ENCODE measurements at regions of chr14 and their contacts with region 1.

Region 1: DNA sequence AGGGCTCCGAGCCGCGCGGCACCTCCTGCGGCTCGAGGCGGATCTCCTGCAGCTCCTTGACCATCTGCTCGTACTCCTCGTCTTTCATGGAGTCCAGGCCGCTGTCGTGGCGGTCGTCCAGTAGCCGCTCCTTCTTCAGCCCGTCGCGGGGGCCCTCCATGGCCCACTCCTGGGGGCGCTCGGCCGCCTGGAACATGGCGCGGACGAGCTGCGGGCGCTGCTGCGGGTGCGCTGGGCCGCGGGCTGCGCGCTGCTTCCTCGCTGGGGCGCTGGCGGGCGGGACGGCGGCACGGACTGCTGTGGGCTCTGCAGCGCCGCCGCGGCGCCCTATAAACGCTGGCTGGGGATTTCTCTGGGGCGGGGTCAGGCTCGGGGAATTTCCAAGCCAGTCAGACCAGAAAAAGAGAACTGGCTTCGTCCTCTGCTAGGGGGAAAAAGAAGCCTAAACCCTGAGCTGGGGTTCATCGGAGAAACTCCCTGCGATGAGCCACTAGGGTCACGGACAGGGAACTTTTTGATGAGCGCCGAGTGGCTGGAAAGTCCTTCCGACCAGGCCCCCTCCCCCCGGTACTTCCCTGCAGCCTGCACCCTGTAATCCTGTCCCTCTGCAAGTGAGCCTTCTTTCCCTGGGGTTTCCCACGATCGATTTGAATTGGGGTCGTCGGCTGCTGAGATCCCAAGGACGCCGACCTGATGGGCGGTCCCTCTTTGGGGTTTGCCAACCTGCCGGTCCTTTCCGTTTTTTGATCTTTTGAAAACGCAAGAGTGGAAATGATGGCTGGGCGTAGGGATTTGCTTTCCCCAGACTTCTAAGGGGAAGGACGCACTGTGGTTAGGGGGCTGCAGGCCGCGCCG is at the start of gene NFKBIA:
- DNase-seq: peak; percentile 98
- ATAC-seq: peak; percentile 72
- H3K4me3 Mint-ChIP-seq: peak within 1 kb of the TSS; percentile 99
- H3K27ac Mint-ChIP-seq: peak within 1 kb of the TSS; percentile 98
- H3K4me1 Mint-ChIP-seq: peaks cover 34% of the 10 kb centered on the region
- H3K27me3 Mint-ChIP-seq: no peaks in the 10 kb centered on the region
- total RNA-seq, gene NFKBIA: 264 to 298 TPM

Region 2: DNA sequence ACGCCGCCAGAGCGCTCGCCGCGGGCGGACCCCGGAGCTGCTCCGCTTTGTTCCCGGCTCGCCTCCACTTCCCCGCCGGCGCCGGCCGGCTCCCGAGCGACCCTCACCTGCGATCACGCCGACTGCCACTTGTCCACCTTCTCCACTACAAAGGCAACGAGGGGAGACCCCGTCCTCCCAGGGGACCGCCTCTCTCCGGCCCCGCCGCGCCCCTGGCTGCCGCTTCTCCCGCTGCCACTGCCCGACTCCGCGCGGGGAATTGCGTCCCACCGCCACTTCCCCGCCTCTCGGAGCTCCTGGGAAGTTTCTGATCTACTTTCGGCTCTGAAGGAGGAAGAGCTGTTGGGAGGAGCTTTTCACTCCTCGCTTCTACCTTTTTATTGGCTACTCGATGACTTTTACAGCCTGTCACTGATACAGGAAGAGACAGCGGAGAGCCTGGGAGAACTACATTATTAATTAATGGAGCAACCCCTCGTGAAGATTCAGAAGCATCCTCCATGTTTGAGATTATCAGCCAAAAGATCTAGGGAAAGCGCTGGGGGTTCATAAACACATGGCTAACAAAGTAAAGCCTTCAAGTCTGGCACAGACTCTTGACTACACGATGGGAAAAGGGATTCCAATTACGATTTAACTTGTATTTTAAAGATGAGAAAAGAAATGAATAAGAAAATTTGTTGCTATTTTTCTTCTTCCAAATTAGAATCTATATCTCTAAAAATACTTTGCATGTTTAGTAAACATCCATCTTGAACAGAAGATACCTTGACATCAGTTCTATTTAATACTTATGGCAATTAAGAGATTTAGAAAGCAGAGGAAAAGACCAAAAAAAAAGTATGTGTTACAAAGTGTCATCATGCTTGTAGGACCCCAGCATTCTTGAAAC is 529.4 kb before region 1 on chr14 and contains the start of gene BAZ1A:
- CTCF ChIA-PET with region 1: no interaction called
- POLR2A ChIA-PET with region 1: no interaction called
- intact Hi-C with region 1: loop called (anchors 2 to 10 kb)
- DNase-seq: peak; percentile 50
- ATAC-seq: peak; percentile 9
- H3K4me3 Mint-ChIP-seq: peak within 1 kb of the TSS; percentile 99
- H3K27ac Mint-ChIP-seq: peak within 1 kb of the TSS; percentile 98
- H3K4me1 Mint-ChIP-seq: peaks cover 29% of the 10 kb centered on the region
- H3K27me3 Mint-ChIP-seq: no peaks in the 10 kb centered on the region
- total RNA-seq, gene BAZ1A: 53.9 to 75.2 TPM

Region 3: DNA sequence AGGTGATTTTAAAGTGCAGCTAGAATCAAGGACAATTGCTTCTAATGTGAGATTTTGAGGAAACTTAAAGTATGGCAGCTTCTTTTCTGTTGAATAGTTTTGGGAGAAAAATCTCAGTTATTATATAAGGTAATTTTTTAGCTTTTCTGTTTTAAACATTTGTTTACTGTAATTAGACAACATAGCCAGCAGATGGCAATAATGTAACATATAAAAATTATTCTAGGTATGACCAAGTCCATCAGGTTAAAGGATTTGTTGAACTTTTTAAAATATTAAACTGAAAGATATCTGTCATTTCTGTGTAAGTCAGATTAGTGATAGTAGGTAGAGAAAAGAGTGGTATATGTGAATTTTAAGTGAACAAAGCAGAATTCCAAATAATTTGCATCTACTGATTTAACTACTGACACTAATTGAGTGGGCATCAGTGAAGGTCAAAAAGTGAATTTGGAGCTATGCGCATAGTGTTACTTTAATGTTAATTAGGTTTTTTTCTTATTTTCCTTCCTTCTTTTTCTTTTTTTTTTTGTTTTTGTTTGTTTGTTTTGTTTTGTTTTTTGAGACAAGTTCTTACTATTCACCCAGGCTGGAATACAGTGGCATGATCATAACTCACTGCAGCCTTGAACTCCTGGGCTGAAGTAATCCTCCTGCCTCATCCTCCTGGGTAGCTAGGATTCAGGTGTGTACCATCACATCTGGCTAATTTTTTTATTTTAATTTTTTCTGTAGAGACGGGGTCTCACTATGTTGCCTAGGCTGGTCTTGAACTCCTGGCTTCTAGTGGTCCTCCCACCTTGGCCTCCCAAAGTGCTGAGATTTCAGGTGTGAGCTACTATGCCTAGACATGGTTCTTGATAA is 263.7 kb before region 1 on chr14:
- CTCF ChIA-PET with region 1: interaction called, 260 read pairs
- POLR2A ChIA-PET with region 1: interaction called, 6 read pairs
- intact Hi-C with region 1: loop called (anchors 1 to 2 kb)
- DNase-seq: no peak
- ATAC-seq: no peak
- H3K4me3 Mint-ChIP-seq: no peak overlapping the region
- H3K27ac Mint-ChIP-seq: no peak overlapping the region
- H3K4me1 Mint-ChIP-seq: peaks cover 14% of the 10 kb centered on the region
- H3K27me3 Mint-ChIP-seq: no peaks in the 10 kb centered on the region

Region 4: GRCh38 chr14:35285168-35286002 is 119.3 kb before region 1 on chr14:
- CTCF ChIA-PET with region 1: interaction called, 31 read pairs
- POLR2A ChIA-PET with region 1: interaction called, 132 read pairs
- intact Hi-C with region 1: loop called (anchors 1 kb)
- DNase-seq: peak; percentile 40
- ATAC-seq: peak; percentile 59
- H3K4me3 Mint-ChIP-seq: peak overlapping the region; percentile 24
- H3K27ac Mint-ChIP-seq: peak overlapping the region; percentile 97
- H3K4me1 Mint-ChIP-seq: peaks cover 56% of the 10 kb centered on the region
- H3K27me3 Mint-ChIP-seq: no peaks in the 10 kb centered on the region

Region 5: DNA sequence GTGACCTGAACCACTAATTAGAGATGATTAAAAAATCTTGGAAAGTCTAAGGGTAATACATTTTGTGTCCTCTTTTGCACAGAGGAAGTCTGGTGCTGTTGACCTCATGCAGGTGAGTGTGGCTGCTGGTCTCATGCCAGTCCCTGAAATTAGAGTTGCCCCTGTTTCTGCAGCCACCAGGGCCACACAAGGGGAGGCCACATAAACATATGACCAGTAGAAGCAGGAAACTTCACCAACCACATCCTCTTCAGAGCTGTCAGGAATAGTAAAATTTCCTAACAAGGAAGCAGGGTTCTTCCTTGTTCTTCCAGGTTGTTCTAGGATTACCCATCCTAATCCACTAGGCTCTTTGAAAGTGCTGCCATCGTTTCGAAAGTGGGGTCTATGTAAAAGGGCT is 84.2 kb before region 1 on chr14:
- CTCF ChIA-PET with region 1: interaction called, 12 read pairs
- POLR2A ChIA-PET with region 1: interaction called, 99 read pairs
- intact Hi-C with region 1: loop called in 1 of 2 experiments (anchors 1 kb)
- DNase-seq: no peak
- ATAC-seq: peak; percentile 23
- H3K4me3 Mint-ChIP-seq: no peak overlapping the region
- H3K27ac Mint-ChIP-seq: no peak overlapping the region
- H3K4me1 Mint-ChIP-seq: no peaks in the 10 kb centered on the region
- H3K27me3 Mint-ChIP-seq: no peaks in the 10 kb centered on the region

Region 6: DNA sequence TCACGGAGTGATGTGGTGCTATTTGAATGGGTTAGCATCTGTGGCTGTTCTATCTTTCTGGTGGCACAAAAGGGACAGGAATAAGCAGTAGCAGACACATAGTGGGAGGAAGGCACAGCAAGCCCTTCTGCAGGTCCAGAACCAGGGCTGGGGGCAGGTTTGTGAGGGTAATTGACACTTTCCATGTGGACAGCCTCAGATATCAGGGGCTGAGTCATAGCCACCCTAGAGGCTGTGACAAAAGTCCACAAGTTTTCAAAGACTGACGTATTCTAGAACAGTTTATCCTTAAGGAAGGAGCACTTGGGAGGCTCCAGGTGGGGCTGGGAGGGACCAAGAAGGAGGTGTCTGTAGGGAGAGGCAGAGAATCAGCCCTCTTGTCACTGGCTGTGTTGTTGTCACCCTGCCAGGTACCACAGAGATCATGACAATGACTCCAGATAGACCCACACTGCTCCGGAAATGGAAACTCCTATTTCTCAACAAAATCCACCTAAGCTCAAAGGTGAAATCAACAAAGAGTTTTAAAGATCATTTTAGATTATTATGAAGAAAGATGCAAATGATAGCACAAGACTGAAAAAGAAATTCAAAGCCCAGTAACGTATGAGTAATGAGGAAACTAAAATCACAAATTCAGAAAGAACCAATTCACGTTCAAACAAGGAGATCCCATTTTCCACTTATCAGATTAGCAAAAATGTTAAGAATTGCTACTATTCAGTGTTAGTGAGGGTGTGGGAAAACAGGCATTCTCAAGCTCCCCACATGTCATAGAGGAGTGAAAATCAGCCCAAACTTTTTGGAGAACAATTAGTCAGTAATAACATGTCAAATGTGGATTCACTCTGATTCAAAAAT is 48.5 kb before region 1 on chr14:
- CTCF ChIA-PET with region 1: interaction called, 3 read pairs
- POLR2A ChIA-PET with region 1: interaction called, 61 read pairs
- intact Hi-C with region 1: loop called (anchors 1 kb)
- DNase-seq: peak; percentile 79
- ATAC-seq: peak; percentile 85
- H3K4me3 Mint-ChIP-seq: peak overlapping the region; percentile 30
- H3K27ac Mint-ChIP-seq: peak overlapping the region; percentile 91
- H3K4me1 Mint-ChIP-seq: peaks cover 46% of the 10 kb centered on the region
- H3K27me3 Mint-ChIP-seq: no peaks in the 10 kb centered on the region

Region 7: GRCh38 chr14:35959835-35960234 is 555.2 kb after region 1 on chr14:
- CTCF ChIA-PET with region 1: no interaction called
- POLR2A ChIA-PET with region 1: no interaction called
- intact Hi-C with region 1: no loop called
- DNase-seq: no peak
- ATAC-seq: no peak
- H3K4me3 Mint-ChIP-seq: no peak overlapping the region
- H3K27ac Mint-ChIP-seq: no peak overlapping the region
- H3K4me1 Mint-ChIP-seq: no peaks in the 10 kb centered on the region
- H3K27me3 Mint-ChIP-seq: no peaks in the 10 kb centered on the region

Measured in activated CD4-positive, alpha-beta T cell treated with anti-CD3 and anti-CD28 coated beads for 36 hours (primary cell).